ENCODE measurements at regions of chr19 and their contacts with region 1.

Region 1: GRCh38 chr19:12782229-12783028 is 7.1 kb upstream of the HOOK2 start:
- DNase-seq: peak; percentile 88 to 99 (median 96)
- ATAC-seq: peak; percentile 75
- H3K4me3 ChIP-seq: peak overlapping the region; percentile 50 to 62
- H3K4me3 Mint-ChIP-seq: peak overlapping the region; percentile 80
- H3K27ac ChIP-seq: peak overlapping the region; percentile 91 to 99
- H3K27ac Mint-ChIP-seq: peak overlapping the region; percentile 95
- H3K4me1 ChIP-seq: peaks cover 68% of the 10 kb centered on the region
- H3K4me1 Mint-ChIP-seq: peaks cover 38% of the 10 kb centered on the region
- H3K27me3 ChIP-seq: no peaks in the 10 kb centered on the region
- H3K27me3 Mint-ChIP-seq: no peaks in the 10 kb centered on the region
- CTCF ChIP-seq: no peak

Region 2: GRCh38 chr19:12945479-12946091 is 163.2 kb after region 1 on chr19 and contains the start of gene RAD23A:
- CTCF ChIA-PET with region 1: no interaction called
- POLR2A ChIA-PET with region 1: no interaction called
- intact Hi-C with region 1: no loop called
- DNase-seq: peak; percentile 97 to 100 (median 98)
- ATAC-seq: peak; percentile 86
- H3K4me3 ChIP-seq: peak within 1 kb of the TSS; percentile 60 to 64
- H3K4me3 Mint-ChIP-seq: peak within 1 kb of the TSS; percentile 91
- H3K27ac ChIP-seq: peak within 1 kb of the TSS; percentile 67 to 83
- H3K27ac Mint-ChIP-seq: peak within 1 kb of the TSS; percentile 96
- H3K4me1 ChIP-seq: peaks cover 35% of the 10 kb centered on the region
- H3K4me1 Mint-ChIP-seq: peaks cover 43% of the 10 kb centered on the region
- H3K27me3 ChIP-seq: no peaks in the 10 kb centered on the region
- H3K27me3 Mint-ChIP-seq: no peaks in the 10 kb centered on the region
- CTCF ChIP-seq: no peak
- total RNA-seq, gene RAD23A: 86.3 to 90.8 TPM

Region 3: DNA sequence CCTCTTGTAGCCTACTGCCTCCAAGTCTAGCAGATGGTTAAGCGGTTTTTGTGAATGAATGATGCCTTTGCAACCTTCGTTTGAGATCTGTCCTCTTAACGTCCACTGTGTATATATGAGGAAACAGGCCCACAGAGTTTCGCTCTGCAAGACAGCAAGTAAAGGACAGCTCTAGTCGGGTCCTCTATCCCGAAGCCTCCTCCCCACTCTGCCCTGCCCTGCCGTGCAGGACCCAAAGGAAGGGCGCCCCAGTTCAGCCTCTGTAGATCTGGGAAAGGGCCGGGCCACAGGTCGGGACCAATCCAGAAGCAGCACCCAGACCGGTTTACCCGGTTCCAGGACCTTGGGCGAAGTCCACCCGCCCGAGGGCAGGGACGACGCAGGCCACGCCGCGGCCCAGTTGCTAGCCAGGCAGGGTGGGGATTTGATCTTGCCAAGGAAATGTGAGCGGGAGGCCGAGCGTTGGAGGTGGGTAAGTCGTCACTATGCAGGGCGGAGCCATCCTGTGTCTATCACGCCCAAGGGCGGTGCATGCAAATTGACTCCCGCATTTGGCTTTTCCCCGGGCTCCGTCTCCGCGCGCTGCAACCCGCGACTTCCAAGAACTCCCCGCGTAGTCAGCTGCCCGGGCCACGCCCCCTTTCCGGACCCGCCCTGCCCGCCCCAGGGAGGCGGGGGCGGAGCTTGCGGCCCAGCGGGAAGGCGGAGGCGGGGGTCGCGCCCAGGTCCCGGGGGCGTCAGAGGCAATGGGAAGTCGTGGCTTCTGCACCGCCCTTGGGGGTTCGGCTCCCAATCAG is 380.3 kb after region 1 on chr19:
- CTCF ChIA-PET with region 1: no interaction called
- POLR2A ChIA-PET with region 1: no interaction called
- intact Hi-C with region 1: loop called in 1 of 2 experiments (anchors 5 kb)
- DNase-seq: peak; percentile 40 to 93 (median 82)
- ATAC-seq: peak; percentile 49
- H3K4me3 ChIP-seq: peak overlapping the region; percentile 56 to 58
- H3K4me3 Mint-ChIP-seq: peak overlapping the region; percentile 85
- H3K27ac ChIP-seq: peak overlapping the region; percentile 68 to 86
- H3K27ac Mint-ChIP-seq: peak overlapping the region; percentile 96
- H3K4me1 ChIP-seq: peaks cover 72% of the 10 kb centered on the region
- H3K4me1 Mint-ChIP-seq: peaks cover 67% of the 10 kb centered on the region
- H3K27me3 ChIP-seq: no peaks in the 10 kb centered on the region
- H3K27me3 Mint-ChIP-seq: no peaks in the 10 kb centered on the region
- CTCF ChIP-seq: no peak

Region 4: DNA sequence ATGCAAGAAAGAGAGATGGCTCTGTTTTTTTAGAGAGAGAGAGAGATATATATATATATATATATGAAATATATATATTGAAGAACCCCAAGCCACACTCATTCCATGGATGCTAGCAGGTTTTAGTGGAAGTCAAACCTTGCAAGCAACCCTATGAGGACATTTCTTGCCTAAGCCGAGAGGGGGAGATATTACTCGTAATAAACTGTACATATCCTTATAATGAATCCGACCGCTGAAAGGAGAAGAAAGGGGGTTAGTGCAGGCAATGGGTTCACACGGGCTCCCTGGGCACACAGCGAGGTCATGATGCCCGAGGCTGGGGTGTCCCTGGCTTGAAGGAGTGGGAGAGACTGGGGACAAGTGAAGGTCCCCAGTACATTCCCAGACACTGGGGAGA is 446.1 kb after region 1 on chr19:
- CTCF ChIA-PET with region 1: no interaction called
- POLR2A ChIA-PET with region 1: no interaction called
- intact Hi-C with region 1: no loop called
- DNase-seq: no peak
- ATAC-seq: no peak
- H3K4me3 ChIP-seq: no peak overlapping the region
- H3K4me3 Mint-ChIP-seq: no peak overlapping the region
- H3K27ac ChIP-seq: no peak overlapping the region
- H3K27ac Mint-ChIP-seq: no peak overlapping the region
- H3K4me1 ChIP-seq: no peaks in the 10 kb centered on the region
- H3K4me1 Mint-ChIP-seq: no peaks in the 10 kb centered on the region
- H3K27me3 ChIP-seq: no peaks in the 10 kb centered on the region
- H3K27me3 Mint-ChIP-seq: peaks cover 9% of the 10 kb centered on the region
- CTCF ChIP-seq: no peak

Measured in CD8-positive, alpha-beta T cell (primary cell).